Head of caudate nucleus (tissue), 42 donors: ENCODE measurements at regions of chr6 and their contacts with region 1.

Region 1: GRCh38 chr6:10968776-10969175 is 75.3 kb downstream of the ELOVL2 start:
- DNase-seq: no peak

Region 2: DNA sequence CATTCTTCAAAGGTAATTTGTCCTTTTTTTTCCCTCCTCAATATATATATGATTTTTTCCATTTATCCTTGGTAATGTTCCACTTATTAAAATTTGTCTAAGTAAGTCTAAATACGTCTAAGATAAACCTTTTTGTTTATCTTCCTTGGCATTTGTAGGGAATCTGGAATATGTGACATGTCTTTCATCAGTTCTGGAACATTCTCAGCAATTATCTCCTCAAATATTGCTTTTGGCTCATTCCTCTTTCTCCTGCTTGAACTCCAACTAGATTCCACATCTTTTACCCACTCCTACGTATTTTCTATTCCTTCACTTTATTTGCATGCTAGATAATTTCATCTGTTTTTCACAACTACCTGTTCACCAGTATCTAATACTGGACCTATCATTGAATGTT is 22.1 kb before region 1 on chr6:
- intact Hi-C with region 1: loop called (anchors 2 kb)
- DNase-seq: no peak